ENCODE measurements at regions of chrX and their contacts with region 1.

Region 1: DNA sequence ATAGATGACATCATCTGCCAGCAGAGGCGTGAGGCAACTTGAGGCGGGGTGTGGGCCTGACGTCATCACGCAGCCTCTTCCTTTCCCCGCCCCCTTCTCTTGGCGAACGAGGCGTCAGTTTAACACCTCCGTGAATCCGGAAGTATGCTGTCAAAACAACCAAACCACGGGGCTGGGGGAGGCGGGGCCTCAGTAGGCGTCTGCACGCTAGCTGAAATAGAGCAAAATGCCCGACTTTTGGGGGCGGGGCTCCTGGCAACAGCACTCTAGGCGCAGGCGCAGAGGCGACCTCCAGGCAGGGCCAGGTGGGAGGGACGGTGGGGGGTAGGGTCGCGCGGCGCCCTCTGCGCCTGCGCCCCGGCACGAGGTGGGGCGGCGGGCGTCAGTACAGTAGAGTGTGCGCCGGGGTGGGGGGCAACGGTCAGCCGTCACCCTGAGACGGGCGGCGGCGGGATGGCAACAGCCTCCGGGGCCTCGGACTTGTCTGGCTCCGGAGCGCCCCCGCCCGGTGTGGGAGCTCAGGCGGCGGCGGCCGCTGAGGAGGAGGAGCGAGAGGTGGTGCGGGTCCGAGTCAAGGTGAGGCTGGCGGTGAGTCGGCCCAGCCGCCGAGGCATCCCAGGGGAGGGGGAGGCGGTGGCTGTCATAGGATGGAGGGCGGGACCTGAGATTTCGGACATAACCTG is at the start of gene TBC1D25:
- H3K4me3 Mint-ChIP-seq: peak within 1 kb of the TSS; percentile 94
- H3K27ac Mint-ChIP-seq: peak within 1 kb of the TSS; percentile 93
- H3K4me1 Mint-ChIP-seq: peaks cover 24% of the 10 kb centered on the region
- H3K27me3 Mint-ChIP-seq: no peaks in the 10 kb centered on the region

Region 2: GRCh38 chrX:48475774-48476577 is 63.5 kb before region 1 on chrX and contains the start of gene FTSJ1:
- intact Hi-C with region 1: loop called (anchors 1 kb)
- H3K4me3 Mint-ChIP-seq: peak within 1 kb of the TSS; percentile 95
- H3K27ac Mint-ChIP-seq: peak within 1 kb of the TSS; percentile 90
- H3K4me1 Mint-ChIP-seq: peaks cover 23% of the 10 kb centered on the region
- H3K27me3 Mint-ChIP-seq: no peaks in the 10 kb centered on the region

Region 3: GRCh38 chrX:48574270-48575266 is 35.1 kb after region 1 on chrX and contains the start of gene RBM3:
- intact Hi-C with region 1: loop called (anchors 1 kb)
- H3K4me3 Mint-ChIP-seq: peak within 1 kb of the TSS; percentile 79
- H3K27ac Mint-ChIP-seq: peak within 1 kb of the TSS; percentile 100
- H3K4me1 Mint-ChIP-seq: peaks cover 25% of the 10 kb centered on the region
- H3K27me3 Mint-ChIP-seq: no peaks in the 10 kb centered on the region

Region 4: DNA sequence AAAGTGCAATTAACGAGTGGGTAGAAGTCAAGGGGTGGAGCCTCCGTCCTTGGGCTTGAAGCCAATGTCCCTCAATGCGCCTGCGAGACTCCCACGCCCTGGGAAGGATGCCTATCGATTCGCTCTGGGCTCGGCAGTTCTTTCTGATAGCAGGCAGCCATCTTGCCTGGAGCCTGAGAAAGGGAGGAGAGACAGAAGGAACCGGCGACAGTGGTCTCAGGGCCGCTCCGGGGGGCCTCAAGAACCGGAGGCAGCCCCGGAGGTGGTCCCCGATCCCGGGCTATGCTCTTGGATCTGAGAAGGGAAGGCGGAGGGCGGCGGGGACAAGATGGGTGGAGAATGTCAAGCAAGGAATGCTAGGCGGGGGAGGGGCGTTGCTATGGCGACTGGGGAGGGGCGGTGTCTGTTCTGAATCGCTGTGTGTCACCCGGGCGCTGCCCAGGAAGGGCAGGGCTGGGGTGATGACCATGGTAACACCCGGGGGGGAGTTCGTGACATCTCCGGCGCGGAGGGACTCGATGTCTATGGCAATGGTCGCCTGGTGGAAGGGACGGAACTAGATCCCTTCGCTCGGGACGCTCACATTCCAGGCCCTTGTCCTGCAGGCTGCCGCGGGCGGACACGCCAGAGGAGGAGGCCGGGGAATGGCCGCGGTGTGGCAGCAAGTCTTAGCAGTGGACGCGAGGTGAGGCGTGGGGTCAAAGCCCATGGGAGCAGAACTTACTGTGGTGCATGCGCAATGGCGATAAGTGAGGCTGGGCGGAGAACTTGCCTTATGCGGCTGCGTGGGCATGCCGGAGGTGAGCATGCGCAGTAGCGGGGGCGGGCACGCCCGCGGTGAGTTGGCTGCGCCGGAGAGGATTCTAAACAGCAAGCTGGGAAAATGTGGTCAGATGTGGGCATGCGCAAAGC is 58.1 kb after region 1 on chrX and contains the start of gene WDR13:
- intact Hi-C with region 1: loop called (anchors 2 kb)
- H3K4me3 Mint-ChIP-seq: peak within 1 kb of the TSS; percentile 87
- H3K27ac Mint-ChIP-seq: peak within 1 kb of the TSS; percentile 98
- H3K4me1 Mint-ChIP-seq: peaks cover 10% of the 10 kb centered on the region
- H3K27me3 Mint-ChIP-seq: no peaks in the 10 kb centered on the region